ENCODE measurements at regions of chr1 and their contacts with region 1.

Region 1: GRCh38 chr1:19644681-19645410 is 735 bp downstream of the NBL1 start:
- DNase-seq: no peak
- H3K4me3 ChIP-seq: peak overlapping the region; percentile 85 to 90
- H3K27ac ChIP-seq: peak overlapping the region; percentile 89
- H3K4me1 ChIP-seq: peaks cover 0 to 63% (median 43%) of the 10 kb centered on the region in 4 donors
- H3K27me3 ChIP-seq: no peaks in the 10 kb centered on the region
- CTCF ChIP-seq: no peak

Region 2: DNA sequence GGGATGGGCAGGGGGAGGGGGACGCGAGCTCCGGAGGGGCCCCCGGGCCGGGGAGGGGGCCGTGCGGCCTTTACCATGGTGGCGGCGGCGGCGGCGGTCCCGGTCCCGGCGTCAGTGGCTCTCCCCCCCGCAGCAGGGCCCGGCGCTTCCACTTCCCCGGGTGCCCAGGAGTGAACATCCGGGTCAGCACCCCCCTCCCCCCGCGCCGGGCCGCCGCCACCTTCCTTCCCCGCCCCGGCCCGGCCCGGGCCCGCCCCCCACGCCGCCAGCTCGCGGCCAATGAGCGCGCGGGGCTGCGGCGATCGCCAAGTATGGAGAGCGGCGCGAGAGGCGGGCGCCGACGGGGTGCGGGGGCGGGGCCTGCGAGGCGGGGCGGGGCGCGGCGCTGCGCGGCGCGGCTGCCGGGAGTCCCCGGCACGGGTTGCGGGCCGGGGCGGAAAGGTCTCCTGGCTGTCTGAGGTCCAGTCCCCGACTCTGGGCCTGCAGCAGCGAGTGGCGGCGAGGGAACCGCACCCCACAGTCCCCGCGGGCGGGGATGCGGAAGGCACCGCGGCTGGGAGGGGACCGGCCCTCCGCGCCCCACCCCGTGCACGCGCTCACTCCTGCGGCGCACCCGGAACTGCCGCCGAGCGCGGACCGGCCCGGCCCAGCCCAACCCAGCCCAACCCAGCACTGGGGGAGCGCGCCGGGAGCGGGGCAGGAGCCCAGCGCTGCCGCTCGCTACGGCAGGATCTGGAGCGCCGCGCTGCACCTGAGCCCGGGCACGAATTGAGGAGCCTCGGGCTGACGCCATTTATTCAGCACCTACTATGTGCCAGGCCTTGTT is 159.3 kb before region 1 on chr1 and contains the start of gene CAPZB:
- intact Hi-C with region 1: loop called (anchors 5 kb)
- DNase-seq: peak; percentile 93 to 97
- H3K4me3 ChIP-seq: peak within 1 kb of the TSS; percentile 66 to 84
- H3K27ac ChIP-seq: peak within 1 kb of the TSS; percentile 90 to 97
- H3K4me1 ChIP-seq: peaks cover 0 to 61% (median 55%) of the 10 kb centered on the region in 4 donors
- H3K27me3 ChIP-seq: no peaks in the 10 kb centered on the region
- CTCF ChIP-seq: peak in 1 of 2 experiments; percentile 14

Region 3: DNA sequence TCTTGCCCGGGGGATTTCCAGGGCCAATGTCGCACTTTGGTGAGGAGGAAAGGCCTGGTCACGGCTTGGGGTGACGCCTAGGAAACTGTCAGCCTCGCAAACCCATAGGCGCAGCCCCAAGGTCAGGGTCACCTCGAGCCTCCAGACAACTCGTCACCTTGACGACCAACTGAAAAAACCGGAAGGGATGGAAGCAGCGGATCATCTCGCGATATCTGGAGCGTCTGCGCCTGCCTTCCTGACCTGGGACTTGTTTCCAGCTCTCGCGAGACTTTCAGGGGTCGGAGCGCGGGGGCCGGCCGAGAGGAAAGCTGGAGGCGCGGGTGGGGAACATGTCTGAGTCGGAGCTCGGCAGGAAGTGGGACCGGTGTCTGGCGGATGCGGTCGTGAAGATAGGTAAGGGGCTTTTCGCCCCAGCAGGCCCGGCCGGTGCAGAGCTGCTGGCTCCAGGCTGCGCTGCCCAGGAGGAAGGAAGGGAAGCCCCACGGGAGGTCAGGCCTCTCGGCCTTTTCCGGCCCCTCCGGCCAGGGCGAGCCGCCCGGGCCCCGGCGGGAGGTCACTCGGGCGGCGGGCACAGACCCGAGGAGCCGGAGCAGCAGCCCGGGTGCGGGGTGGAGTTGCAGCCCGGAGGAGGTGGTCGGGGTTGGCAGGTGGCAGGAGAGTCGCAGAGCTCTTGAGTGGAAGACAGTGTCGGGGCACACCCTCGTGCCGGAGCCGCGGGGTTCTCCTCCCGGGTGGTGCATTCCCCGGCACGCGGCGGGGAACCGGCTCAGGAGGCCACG is 47.9 kb before region 1 on chr1:
- intact Hi-C with region 1: loop called (anchors 5 kb)
- DNase-seq: peak; percentile 96 to 98
- H3K4me3 ChIP-seq: peak overlapping the region; percentile 73 to 92
- H3K27ac ChIP-seq: peak overlapping the region; percentile 86 to 92
- H3K4me1 ChIP-seq: peaks cover 0 to 34% (median 22%) of the 10 kb centered on the region in 4 donors
- H3K27me3 ChIP-seq: no peaks in the 10 kb centered on the region
- CTCF ChIP-seq: no peak